Thyroid gland (tissue), 4 donors: ENCODE measurements at regions of chr22 and their contacts with region 1.

Region 1: GRCh38 chr22:29040385-29041275 is 21.0 kb downstream of the C22orf31 start:
- DNase-seq: peak; percentile 73 to 80
- H3K4me3 ChIP-seq: no peak overlapping the region
- H3K27ac ChIP-seq: no peak overlapping the region
- H3K4me1 ChIP-seq: peaks cover 12 to 14% of the 10 kb centered on the region in 2 donors
- H3K27me3 ChIP-seq: no peaks in the 10 kb centered on the region
- CTCF ChIP-seq: peak; percentile 92 to 96 (median 94)
- POLR2A ChIP-seq: no peak

Region 2: GRCh38 chr22:28043266-28043665 is 997.4 kb before region 1 on chr22:
- intact Hi-C with region 1: loop called (anchors 10 kb)
- DNase-seq: no peak
- H3K4me3 ChIP-seq: no peak overlapping the region
- H3K27ac ChIP-seq: no peak overlapping the region
- H3K4me1 ChIP-seq: peaks cover 5 to 6% of the 10 kb centered on the region in 2 donors
- H3K27me3 ChIP-seq: no peaks in the 10 kb centered on the region
- CTCF ChIP-seq: no peak
- POLR2A ChIP-seq: no peak

Region 3: DNA sequence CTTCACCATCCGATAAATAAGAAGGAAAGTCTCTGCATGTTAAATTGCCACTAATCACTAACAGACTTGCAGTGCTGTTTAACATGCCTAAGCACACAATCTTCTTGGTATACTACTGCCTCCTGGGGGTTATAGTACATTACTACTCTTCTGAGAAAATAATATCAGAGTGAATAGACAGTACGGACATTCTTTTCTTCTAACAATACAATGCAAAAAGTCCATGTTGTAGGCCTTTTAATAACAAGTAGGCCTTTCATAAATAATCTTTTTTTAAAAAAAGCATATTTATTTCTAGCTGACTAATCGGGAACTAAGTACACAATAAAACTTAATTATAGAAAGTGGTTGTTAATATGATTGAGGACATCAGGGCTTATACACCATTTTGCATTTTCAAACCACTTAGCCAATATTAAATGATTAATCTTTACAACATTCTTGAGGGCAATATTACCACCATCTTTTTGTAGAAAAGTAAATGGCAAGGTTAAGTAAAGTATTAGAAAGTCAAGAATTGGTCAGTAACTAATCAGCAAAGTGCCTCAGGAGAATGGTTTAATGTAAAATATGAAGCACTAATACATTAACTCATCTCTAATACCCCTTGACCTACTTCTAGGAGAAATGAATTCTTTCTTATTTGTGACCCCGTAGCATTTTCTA is 445.7 kb before region 1 on chr22:
- intact Hi-C with region 1: loop called (anchors 10 kb)
- DNase-seq: no peak
- H3K4me3 ChIP-seq: no peak overlapping the region
- H3K27ac ChIP-seq: no peak overlapping the region
- H3K4me1 ChIP-seq: peaks cover 0 to 4% of the 10 kb centered on the region in 2 donors
- H3K27me3 ChIP-seq: no peaks in the 10 kb centered on the region
- CTCF ChIP-seq: peak; percentile 38 to 91 (median 67)
- POLR2A ChIP-seq: no peak

Region 4: DNA sequence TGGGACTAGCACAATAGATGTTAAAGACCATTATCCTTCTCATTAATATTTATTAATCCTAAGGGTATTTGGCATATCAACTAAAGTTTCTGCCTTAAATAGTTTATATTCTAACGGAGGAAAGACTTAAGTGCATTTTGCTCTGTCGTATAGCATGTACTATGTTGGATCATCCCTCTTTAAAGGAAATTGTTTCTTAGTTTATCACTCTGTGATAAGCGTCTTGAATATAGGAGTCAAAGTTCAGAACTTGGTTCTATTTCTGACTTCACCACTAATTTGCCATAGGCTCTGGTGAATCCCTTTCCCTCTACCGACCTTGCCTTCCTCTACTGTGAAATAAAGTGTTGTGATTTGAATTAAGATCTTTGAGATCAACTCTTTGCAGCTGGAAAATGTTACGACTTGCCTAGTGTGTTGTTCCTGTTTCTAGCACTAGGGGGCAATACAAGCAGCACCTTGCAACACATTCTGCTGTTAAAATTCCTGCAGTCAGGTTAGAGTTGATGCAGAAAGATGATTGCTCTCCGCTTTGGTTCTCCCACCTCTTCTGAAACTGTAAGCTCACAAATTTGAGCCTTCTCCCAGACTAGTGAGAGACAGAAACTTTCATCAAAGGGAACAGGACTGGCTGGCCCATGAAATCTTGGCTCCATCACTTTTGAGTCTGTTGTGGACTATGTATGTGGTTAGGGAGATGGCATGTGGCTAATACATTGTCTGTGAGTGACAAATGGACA is 185.1 kb before region 1 on chr22:
- intact Hi-C with region 1: loop called (anchors 2 kb)
- DNase-seq: peak; percentile 39 to 41
- H3K4me3 ChIP-seq: no peak overlapping the region
- H3K27ac ChIP-seq: no peak overlapping the region
- H3K4me1 ChIP-seq: no peaks in the 10 kb centered on the region
- H3K27me3 ChIP-seq: no peaks in the 10 kb centered on the region
- CTCF ChIP-seq: peak; percentile 65 to 99 (median 91)
- POLR2A ChIP-seq: no peak